ENCODE measurements at regions of chr2 and their contacts with region 1.

Region 1: GRCh38 chr2:105398699-105399432 is at the start of gene FHL2:
- DNase-seq: peak; percentile 60 to 89
- H3K4me3 ChIP-seq: peak within 1 kb of the TSS; percentile 81 to 96 (median 92)
- H3K27ac ChIP-seq: peak within 1 kb of the TSS; percentile 92
- H3K4me1 ChIP-seq: peaks cover 0 to 10% (median 4%) of the 10 kb centered on the region in 4 experiments; a peak in 6 of 7 replicates
- H3K27me3 ChIP-seq: peaks cover 7 to 17% (median 13%) of the 10 kb centered on the region in 4 experiments
- CTCF ChIP-seq: peak; percentile 45 to 55 (median 46)
- EP300 ChIP-seq: peak in 1 of 2 experiments; percentile 76; a peak in 1 of 3 replicates
- POLR2A ChIP-seq: peak; percentile 64 to 93
- RAD21 ChIP-seq: peak in 1 of 2 experiments; percentile 9; a peak in 1 of 4 replicates
- total RNA-seq, gene FHL2: 33.2 and 33.4 TPM in 2 replicates

Region 2: GRCh38 chr2:105369747-105370690 is 28.8 kb before region 1 on chr2:
- CTCF ChIA-PET with region 1: interaction called, 10 read pairs
- POLR2A ChIA-PET with region 1: interaction called, 6 read pairs
- DNase-seq: peak; percentile 75 to 89
- H3K4me3 ChIP-seq: no peak overlapping the region
- H3K27ac ChIP-seq: no peak overlapping the region
- H3K4me1 ChIP-seq: no peaks in the 10 kb centered on the region
- H3K27me3 ChIP-seq: no peaks in the 10 kb centered on the region
- CTCF ChIP-seq: peak; percentile 95 to 99 (median 98)
- EP300 ChIP-seq: no peak
- POLR2A ChIP-seq: no peak
- RAD21 ChIP-seq: peak; percentile 95 to 96

Region 3: GRCh38 chr2:105409717-105410116 is 10.9 kb after region 1 on chr2:
- CTCF ChIA-PET with region 1: interaction called, 16 read pairs
- POLR2A ChIA-PET with region 1: interaction called, 32 read pairs
- DNase-seq: peak in 1 of 2 experiments; percentile 27
- H3K4me3 ChIP-seq: no peak overlapping the region
- H3K27ac ChIP-seq: no peak overlapping the region
- H3K4me1 ChIP-seq: no peaks in the 10 kb centered on the region
- H3K27me3 ChIP-seq: no peaks in the 10 kb centered on the region; a peak in 1 of 7 replicates
- CTCF ChIP-seq: no peak
- EP300 ChIP-seq: no peak
- POLR2A ChIP-seq: no peak
- RAD21 ChIP-seq: no peak

Region 4: GRCh38 chr2:105416156-105416555 is 17.3 kb after region 1 on chr2:
- CTCF ChIA-PET with region 1: interaction called, 16 read pairs
- POLR2A ChIA-PET with region 1: interaction called, 32 read pairs
- DNase-seq: no peak
- H3K4me3 ChIP-seq: no peak overlapping the region
- H3K27ac ChIP-seq: no peak overlapping the region
- H3K4me1 ChIP-seq: no peaks in the 10 kb centered on the region
- H3K27me3 ChIP-seq: no peaks in the 10 kb centered on the region
- CTCF ChIP-seq: no peak
- EP300 ChIP-seq: no peak
- POLR2A ChIP-seq: no peak
- RAD21 ChIP-seq: no peak

Region 5: DNA sequence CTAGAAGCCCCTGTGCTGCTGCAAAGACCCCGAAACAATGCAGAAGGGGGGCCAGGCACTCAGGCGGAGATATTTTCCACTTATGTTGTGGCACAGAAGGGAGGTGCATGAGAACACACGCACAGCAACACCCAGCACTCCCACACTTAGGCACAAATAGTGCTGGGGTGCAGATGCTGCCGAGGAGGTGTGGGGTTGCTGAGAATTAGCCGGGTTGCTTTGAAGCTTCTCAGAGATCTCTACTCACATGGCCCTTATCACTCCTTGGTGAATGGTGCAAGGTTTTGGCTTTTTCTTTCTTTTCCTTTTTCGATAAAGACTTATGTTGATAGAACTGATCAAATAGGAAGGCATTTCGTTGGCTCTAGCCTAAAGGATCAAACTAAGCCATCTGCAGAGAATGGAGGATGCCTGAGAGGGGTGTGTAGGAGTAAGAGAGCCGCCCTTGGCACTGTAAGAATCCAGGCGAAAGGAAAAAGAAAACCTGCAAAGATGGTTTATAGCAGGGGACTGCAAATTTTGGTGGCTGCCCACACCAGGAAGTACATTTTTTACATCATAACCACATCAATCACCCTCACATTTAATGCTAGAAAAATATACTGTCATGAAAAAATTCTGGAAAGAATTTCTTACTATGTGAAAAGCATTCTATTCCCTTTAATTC is 27.9 kb after region 1 on chr2:
- CTCF ChIA-PET with region 1: interaction called, 3 read pairs
- POLR2A ChIA-PET with region 1: interaction called, 13 read pairs
- DNase-seq: no peak
- H3K4me3 ChIP-seq: peak overlapping the region in 1 of 4 experiments; percentile 12; a peak in 1 of 8 replicates
- H3K27ac ChIP-seq: no peak overlapping the region
- H3K4me1 ChIP-seq: peaks cover 3 to 19% (median 11%) of the 10 kb centered on the region in 4 experiments; a peak in 6 of 7 replicates
- H3K27me3 ChIP-seq: no peaks in the 10 kb centered on the region
- CTCF ChIP-seq: no peak
- EP300 ChIP-seq: no peak
- POLR2A ChIP-seq: no peak
- RAD21 ChIP-seq: no peak

Region 6: GRCh38 chr2:105557021-105557920 is 158.4 kb after region 1 on chr2:
- CTCF ChIA-PET with region 1: no interaction called
- POLR2A ChIA-PET with region 1: no interaction called
- DNase-seq: no peak
- H3K4me3 ChIP-seq: no peak overlapping the region
- H3K27ac ChIP-seq: no peak overlapping the region
- H3K4me1 ChIP-seq: no peaks in the 10 kb centered on the region
- H3K27me3 ChIP-seq: no peaks in the 10 kb centered on the region
- CTCF ChIP-seq: no peak
- EP300 ChIP-seq: no peak
- POLR2A ChIP-seq: no peak
- RAD21 ChIP-seq: no peak